ENCODE measurements at regions of chr16 and their contacts with region 1.

Region 1: GRCh38 chr16:11851294-11852091 is at the start of gene RSL1D1:
- DNase-seq: peak; percentile 87 to 95
- H3K4me3 ChIP-seq: peak within 1 kb of the TSS; percentile 89
- H3K27ac ChIP-seq: peak within 1 kb of the TSS; percentile 88 to 89
- H3K4me1 ChIP-seq: peaks cover 0 to 51% (median 30%) of the 10 kb centered on the region in 4 donors
- H3K27me3 ChIP-seq: no peaks in the 10 kb centered on the region
- CTCF ChIP-seq: no peak

Region 2: GRCh38 chr16:11915644-11916523 is 64.4 kb after region 1 on chr16 and contains the start of gene GSPT1:
- intact Hi-C with region 1: loop called (anchors 10 kb)
- DNase-seq: peak; percentile 98 to 99
- H3K4me3 ChIP-seq: peak within 1 kb of the TSS; percentile 80 to 96
- H3K27ac ChIP-seq: peak within 1 kb of the TSS; percentile 91 to 94
- H3K4me1 ChIP-seq: peaks cover 0 to 37% (median 24%) of the 10 kb centered on the region in 4 donors
- H3K27me3 ChIP-seq: no peaks in the 10 kb centered on the region
- CTCF ChIP-seq: peak; percentile 19 to 60

Region 3: GRCh38 chr16:12043953-12044352 is 192.5 kb after region 1 on chr16:
- intact Hi-C with region 1: no loop called
- DNase-seq: no peak
- H3K4me3 ChIP-seq: no peak overlapping the region
- H3K27ac ChIP-seq: no peak overlapping the region
- H3K4me1 ChIP-seq: no peaks in the 10 kb centered on the region
- H3K27me3 ChIP-seq: no peaks in the 10 kb centered on the region
- CTCF ChIP-seq: no peak

Region 4: GRCh38 chr16:12067714-12068401 is 216.4 kb after region 1 on chr16:
- intact Hi-C with region 1: loop called (anchors 10 kb)
- DNase-seq: peak in 1 of 2 donors; percentile 71
- H3K4me3 ChIP-seq: no peak overlapping the region
- H3K27ac ChIP-seq: no peak overlapping the region
- H3K4me1 ChIP-seq: peaks cover 0 to 15% (median 7%) of the 10 kb centered on the region in 4 donors
- H3K27me3 ChIP-seq: no peaks in the 10 kb centered on the region
- CTCF ChIP-seq: peak; percentile 84 to 93

Measured in tibial artery (tissue), 4 donors.